Heart right ventricle (tissue), 16 donors: ENCODE measurements at regions of chr1 and their contacts with region 1.

Region 1: DNA sequence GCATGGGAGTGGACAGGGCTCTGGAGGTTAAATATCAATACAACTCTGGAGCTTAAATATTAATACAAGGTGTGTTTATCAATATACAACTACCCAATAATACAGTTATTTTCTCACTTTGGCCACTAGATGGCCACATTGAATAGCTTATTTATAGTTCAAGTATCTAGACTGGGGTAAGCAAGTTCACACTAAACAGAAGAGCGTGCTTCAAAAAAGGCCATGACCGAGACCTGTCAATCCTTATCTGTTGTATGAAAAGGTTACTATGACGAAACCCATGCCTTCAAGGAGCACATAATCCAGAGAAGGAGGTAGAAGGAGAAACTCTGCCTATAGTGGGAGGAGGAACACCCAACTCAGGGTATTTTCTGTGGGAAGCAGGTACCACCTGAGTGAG is 29.1 kb downstream of the CHML start:
- DNase-seq: no peak
- ATAC-seq: peak in 7 of 8 donors; percentile 72 to 88 (median 83)
- H3K4me3 ChIP-seq: no peak overlapping the region
- H3K27ac ChIP-seq: peak overlapping the region in 1 of 10 donors; percentile 59
- H3K4me1 ChIP-seq: peaks cover 0 to 19% (median 0%) of the 10 kb centered on the region in 9 donors
- H3K27me3 ChIP-seq: no peaks in the 10 kb centered on the region
- CTCF ChIP-seq: peak; percentile 54 to 77 (median 68)

Region 2: GRCh38 chr1:241460098-241460873 is 150.8 kb before region 1 on chr1:
- intact Hi-C with region 1: no loop called
- DNase-seq: no peak
- ATAC-seq: no peak
- H3K4me3 ChIP-seq: no peak overlapping the region
- H3K27ac ChIP-seq: no peak overlapping the region
- H3K4me1 ChIP-seq: no peaks in the 10 kb centered on the region
- H3K27me3 ChIP-seq: no peaks in the 10 kb centered on the region
- CTCF ChIP-seq: no peak

Region 3: GRCh38 chr1:241495741-241496140 is 115.3 kb before region 1 on chr1:
- intact Hi-C with region 1: no loop called
- DNase-seq: no peak
- ATAC-seq: no peak
- H3K4me3 ChIP-seq: no peak overlapping the region
- H3K27ac ChIP-seq: no peak overlapping the region
- H3K4me1 ChIP-seq: peaks cover 0 to 2% (median 0%) of the 10 kb centered on the region in 9 donors
- H3K27me3 ChIP-seq: no peaks in the 10 kb centered on the region
- CTCF ChIP-seq: no peak

Region 4: GRCh38 chr1:241834733-241835377 is 223.8 kb after region 1 on chr1:
- intact Hi-C with region 1: loop called (anchors 5 to 10 kb)
- DNase-seq: no peak
- ATAC-seq: no peak
- H3K4me3 ChIP-seq: no peak overlapping the region
- H3K27ac ChIP-seq: no peak overlapping the region
- H3K4me1 ChIP-seq: no peaks in the 10 kb centered on the region
- H3K27me3 ChIP-seq: peaks cover 0 to 17% (median 3%) of the 10 kb centered on the region in 7 donors
- CTCF ChIP-seq: peak in 8 of 9 donors; percentile 26 to 64 (median 52)

Region 5: GRCh38 chr1:241842565-241842964 is 231.5 kb after region 1 on chr1:
- intact Hi-C with region 1: loop called in 6 of 10 experiments (anchors 5 to 10 kb)
- DNase-seq: no peak
- ATAC-seq: peak in 6 of 8 donors; percentile 55 to 99 (median 85)
- H3K4me3 ChIP-seq: no peak overlapping the region
- H3K27ac ChIP-seq: peak overlapping the region in 4 of 10 donors; percentile 39 to 61 (median 46)
- H3K4me1 ChIP-seq: peaks cover 0 to 15% (median 0%) of the 10 kb centered on the region in 9 donors
- H3K27me3 ChIP-seq: no peaks in the 10 kb centered on the region
- CTCF ChIP-seq: no peak

Region 6: DNA sequence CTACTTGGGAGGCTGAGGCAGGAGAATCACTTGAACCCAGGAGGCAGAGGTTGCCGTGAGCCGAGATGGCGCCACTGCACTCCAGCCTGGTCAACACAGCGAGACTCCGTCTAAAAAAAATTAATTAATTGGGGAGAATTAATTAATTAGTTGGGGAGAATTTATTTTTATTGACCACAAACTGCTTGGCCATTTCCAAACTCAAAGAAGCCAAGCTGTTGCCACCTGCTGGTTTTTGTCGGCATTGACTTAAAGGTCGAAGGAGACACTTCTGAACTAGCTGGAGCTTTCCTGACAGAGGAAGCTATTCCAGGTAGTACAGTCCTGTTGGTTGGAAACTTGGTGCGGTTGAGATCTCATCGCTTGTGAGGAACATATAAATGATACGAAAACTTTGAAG is 374.7 kb after region 1 on chr1:
- intact Hi-C with region 1: loop called in 2 of 10 experiments (anchors 10 kb)
- DNase-seq: no peak
- ATAC-seq: no peak
- H3K4me3 ChIP-seq: no peak overlapping the region
- H3K27ac ChIP-seq: no peak overlapping the region
- H3K4me1 ChIP-seq: no peaks in the 10 kb centered on the region
- H3K27me3 ChIP-seq: no peaks in the 10 kb centered on the region
- CTCF ChIP-seq: peak in 7 of 9 donors; percentile 34 to 53 (median 42)

Region 7: DNA sequence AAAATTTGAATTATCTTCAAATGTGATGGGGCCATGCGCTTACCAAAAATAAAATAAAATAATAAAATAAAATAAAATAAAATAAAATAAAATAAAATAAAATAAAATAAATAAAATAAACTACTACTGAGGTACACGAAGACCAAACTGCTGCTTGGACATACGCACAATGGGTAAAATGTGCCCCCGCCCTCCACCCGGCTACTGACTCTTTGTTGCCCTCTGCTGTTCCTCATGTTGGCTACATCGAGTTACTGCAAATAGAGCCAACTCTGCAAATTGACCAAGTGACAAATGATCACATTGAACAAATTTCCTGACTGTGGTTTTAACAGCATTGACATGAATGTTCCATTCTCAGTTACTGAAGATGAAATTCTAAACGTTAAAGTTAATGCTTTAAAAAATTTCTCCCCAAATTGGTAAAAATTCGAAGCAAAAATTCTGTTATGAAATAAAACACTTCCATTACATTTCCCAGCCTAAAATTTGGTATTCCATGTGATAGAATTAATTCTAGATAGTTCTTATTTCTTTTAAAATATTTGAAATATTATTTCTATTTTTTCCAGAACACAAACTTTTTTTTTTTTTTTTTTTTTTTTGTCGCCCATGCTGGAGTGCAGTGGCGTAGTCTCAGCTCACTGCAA is 406.6 kb after region 1 on chr1:
- intact Hi-C with region 1: loop called in 2 of 10 experiments (anchors 10 kb)
- DNase-seq: peak; percentile 20 to 44
- ATAC-seq: peak in 1 of 8 donors; percentile 75
- H3K4me3 ChIP-seq: no peak overlapping the region
- H3K27ac ChIP-seq: no peak overlapping the region
- H3K4me1 ChIP-seq: no peaks in the 10 kb centered on the region
- H3K27me3 ChIP-seq: no peaks in the 10 kb centered on the region
- CTCF ChIP-seq: peak; percentile 37 to 79 (median 67)